Sciatic nerve (tissue), 2 donors: ENCODE measurements at regions of chr22 and their contacts with region 1.

Region 1: DNA sequence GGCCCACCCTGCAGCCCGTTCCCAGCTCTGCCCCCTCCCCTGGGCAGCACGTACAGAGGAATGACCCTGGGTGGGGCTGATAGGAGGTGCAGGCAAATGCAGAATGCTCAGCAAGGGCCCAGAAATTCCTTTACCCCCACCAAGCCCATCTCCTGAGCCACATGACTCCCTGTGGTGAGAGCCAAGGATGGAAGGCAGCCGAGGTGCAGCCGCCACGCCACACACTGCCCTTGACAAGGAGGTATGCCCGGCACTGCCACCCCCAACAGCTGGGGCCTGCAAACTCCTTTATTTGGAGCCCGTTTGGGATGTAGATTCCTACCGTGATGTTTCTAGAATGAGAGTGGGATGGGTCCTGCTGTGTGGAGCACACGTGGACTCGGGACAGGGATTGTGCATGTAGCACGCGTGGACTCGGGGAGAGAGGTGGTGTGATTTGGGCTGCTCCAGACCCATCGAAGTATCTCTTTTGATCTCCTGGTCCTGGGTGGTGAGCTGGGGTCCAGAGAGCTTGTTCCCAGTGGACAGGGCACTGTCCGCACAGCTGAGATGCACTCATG is 12.9 kb downstream of the GTSE1 start:
- DNase-seq: no peak
- ATAC-seq: peak; percentile 30

Region 2: DNA sequence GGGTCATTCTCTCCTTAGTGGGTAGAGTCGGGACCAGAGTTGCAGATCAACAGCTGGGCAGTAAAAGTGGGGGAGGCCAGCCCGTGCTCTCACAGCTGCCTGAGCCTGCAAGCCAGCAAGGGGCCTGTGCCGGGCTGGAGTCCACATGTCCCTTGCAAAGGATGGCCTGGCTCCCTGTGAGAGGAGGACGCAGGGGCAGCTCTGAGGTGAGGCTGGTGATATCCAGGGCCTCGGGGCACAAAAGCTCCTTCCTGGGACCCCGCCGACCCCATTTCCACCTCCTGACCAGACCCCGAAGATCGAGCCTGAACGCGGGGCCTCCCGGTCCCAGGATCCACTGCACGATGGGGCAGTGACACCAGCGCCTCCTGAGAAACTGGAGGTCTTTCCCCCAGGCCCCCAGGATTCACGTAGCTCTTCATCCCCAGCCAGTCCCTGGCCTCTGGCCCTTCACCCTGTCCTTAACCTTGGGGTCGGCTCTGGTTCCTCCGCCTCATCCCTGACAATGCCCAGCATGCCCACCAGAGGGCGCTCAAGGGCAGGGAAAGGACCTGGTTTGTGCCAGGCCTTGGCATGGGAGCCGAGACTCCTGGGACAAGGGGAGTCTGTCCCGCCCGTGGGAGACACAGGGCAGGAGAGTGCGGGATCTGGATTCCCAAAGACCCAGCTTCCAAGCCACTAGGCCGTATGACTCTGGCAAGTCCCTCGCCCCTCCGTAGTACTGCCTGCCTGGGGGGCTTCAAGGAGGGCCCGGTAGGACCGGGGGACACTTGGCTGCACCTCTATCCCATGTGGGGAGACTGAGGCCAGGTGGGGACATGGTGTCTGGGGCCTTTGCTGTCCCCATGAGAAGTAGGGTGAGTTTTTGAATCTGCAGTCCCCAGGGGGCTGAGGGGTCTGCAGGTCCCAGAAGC is 314.9 kb before region 1 on chr22:
- intact Hi-C with region 1: loop called (anchors 10 kb)
- DNase-seq: peak; percentile 95
- ATAC-seq: peak; percentile 62

Region 3: GRCh38 chr22:46934746-46935491 is 625.3 kb after region 1 on chr22:
- intact Hi-C with region 1: no loop called
- DNase-seq: no peak
- ATAC-seq: no peak